ENCODE measurements at regions of chr2 and their contacts with region 1.

Region 1: GRCh38 chr2:97806738-97807618 is 93.6 kb downstream of the ZAP70 start:
- DNase-seq: peak; percentile 76 to 87 (median 81)
- H3K4me3 ChIP-seq: no peak overlapping the region
- H3K27ac ChIP-seq: no peak overlapping the region
- H3K4me1 ChIP-seq: no peaks in the 10 kb centered on the region
- H3K27me3 ChIP-seq: no peaks in the 10 kb centered on the region
- CTCF ChIP-seq: peak; percentile 70 to 76 (median 72)
- EP300 ChIP-seq: no peak
- POLR2A ChIP-seq: no peak

Region 2: GRCh38 chr2:98379672-98380535 is 572.9 kb after region 1 on chr2:
- intact Hi-C with region 1: loop called in 3 of 4 experiments (anchors 5 kb)
- DNase-seq: no peak
- H3K4me3 ChIP-seq: no peak overlapping the region
- H3K27ac ChIP-seq: no peak overlapping the region
- H3K4me1 ChIP-seq: peaks cover 13% of the 10 kb centered on the region
- H3K27me3 ChIP-seq: no peaks in the 10 kb centered on the region
- CTCF ChIP-seq: no peak
- EP300 ChIP-seq: no peak
- POLR2A ChIP-seq: no peak

Region 3: DNA sequence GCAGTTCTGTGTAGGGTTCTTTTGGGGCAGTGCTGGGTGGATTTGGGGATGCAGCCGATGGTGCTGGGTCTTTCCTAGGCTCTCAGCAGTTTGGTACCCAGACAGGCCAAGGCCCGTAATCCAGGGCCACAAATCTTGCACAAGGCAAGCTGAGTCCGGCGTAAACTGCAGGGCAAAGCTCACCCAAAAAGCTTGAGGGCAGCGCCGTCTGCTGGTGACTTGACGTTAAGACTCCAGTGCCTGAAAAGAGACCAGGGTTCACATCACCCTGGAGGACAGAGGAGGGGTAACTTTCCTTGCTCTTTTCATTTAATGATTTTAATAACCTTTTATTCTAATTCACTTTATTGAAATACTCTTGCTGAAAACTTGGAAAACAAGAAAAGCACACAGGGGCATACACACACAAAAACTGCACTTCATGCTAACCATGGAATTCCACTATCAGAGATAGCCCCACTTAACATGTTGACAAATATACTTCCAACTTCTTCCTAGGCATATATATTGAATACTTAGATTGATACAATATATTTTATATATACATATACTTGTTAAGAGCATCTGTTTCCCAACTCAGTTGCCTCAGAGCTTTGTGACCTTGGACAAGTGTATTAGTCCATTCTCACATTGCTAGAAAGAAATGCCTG is 578.2 kb after region 1 on chr2:
- intact Hi-C with region 1: loop called (anchors 2 to 5 kb)
- DNase-seq: peak; percentile 52 to 83 (median 76)
- H3K4me3 ChIP-seq: no peak overlapping the region
- H3K27ac ChIP-seq: no peak overlapping the region
- H3K4me1 ChIP-seq: peaks cover 2% of the 10 kb centered on the region
- H3K27me3 ChIP-seq: no peaks in the 10 kb centered on the region
- CTCF ChIP-seq: peak; percentile 56 to 84 (median 76)
- EP300 ChIP-seq: no peak
- POLR2A ChIP-seq: no peak